Activated CD8-positive, alpha-beta T cell treated with anti-CD3 and anti-CD28 coated beads for 36 hours (primary cell): ENCODE measurements at regions of chr1 and their contacts with region 1.

Region 1: GRCh38 chr1:1826356-1827088 is 48.3 kb upstream of the NADK start:
- DNase-seq: no peak
- ATAC-seq: no peak
- H3K4me3 Mint-ChIP-seq: no peak overlapping the region
- H3K27ac Mint-ChIP-seq: peak overlapping the region; percentile 26
- H3K4me1 Mint-ChIP-seq: peaks cover 45% of the 10 kb centered on the region
- H3K27me3 Mint-ChIP-seq: no peaks in the 10 kb centered on the region
- CTCF ChIP-seq: no peak

Region 2: GRCh38 chr1:1809489-1809888 is 17.0 kb before region 1 on chr1:
- CTCF ChIA-PET with region 1: interaction called, 10 read pairs
- POLR2A ChIA-PET with region 1: no interaction called
- intact Hi-C with region 1: no loop called
- DNase-seq: no peak
- ATAC-seq: no peak
- H3K4me3 Mint-ChIP-seq: no peak overlapping the region
- H3K27ac Mint-ChIP-seq: no peak overlapping the region
- H3K4me1 Mint-ChIP-seq: peaks cover 5% of the 10 kb centered on the region
- H3K27me3 Mint-ChIP-seq: no peaks in the 10 kb centered on the region
- CTCF ChIP-seq: no peak

Region 3: DNA sequence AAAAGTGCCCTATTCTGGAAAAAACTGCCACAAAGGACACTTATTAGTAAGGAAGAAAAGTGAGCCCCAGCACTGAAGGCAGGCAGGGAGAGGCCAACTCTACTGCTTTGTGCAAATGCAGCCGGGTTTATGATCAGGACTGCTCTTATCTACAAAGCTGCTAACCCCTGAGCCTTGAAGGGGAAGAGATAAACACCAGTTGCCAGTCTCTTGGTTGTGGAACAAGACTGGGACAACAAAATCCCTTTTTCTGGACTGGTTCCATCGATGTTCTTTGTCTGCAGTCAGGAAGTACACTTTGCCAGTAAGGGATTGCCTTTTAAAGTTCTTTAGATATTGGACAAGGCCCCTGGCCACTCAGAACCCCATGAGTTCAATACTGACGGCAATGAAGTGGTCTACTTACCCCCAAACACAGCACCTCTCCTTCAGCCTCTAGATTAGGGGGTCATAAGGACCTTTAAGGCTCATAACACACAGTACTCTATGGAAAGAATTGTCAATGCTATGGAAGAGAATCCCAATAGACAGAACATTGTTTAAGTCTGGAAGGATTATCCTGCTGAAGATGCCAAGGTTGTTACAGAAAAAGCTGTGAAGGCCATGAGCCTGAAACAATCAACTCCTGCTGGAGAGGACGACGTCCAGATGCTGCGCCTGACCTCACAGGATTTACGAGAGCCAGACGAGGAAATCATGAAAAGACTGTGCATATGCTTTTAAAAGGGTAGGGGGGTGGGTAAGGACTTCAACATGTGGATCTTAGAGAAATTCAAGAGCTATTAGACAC is 20.7 kb after region 1 on chr1:
- CTCF ChIA-PET with region 1: no interaction called
- POLR2A ChIA-PET with region 1: no interaction called
- intact Hi-C with region 1: no loop called
- DNase-seq: no peak
- ATAC-seq: no peak
- H3K4me3 Mint-ChIP-seq: no peak overlapping the region
- H3K27ac Mint-ChIP-seq: peak overlapping the region; percentile 31
- H3K4me1 Mint-ChIP-seq: peaks cover 53% of the 10 kb centered on the region
- H3K27me3 Mint-ChIP-seq: no peaks in the 10 kb centered on the region
- CTCF ChIP-seq: no peak

Region 4: GRCh38 chr1:2279210-2279639 is 452.7 kb after region 1 on chr1:
- CTCF ChIA-PET with region 1: no interaction called
- POLR2A ChIA-PET with region 1: no interaction called
- intact Hi-C with region 1: no loop called
- DNase-seq: no peak
- ATAC-seq: no peak
- H3K4me3 Mint-ChIP-seq: no peak overlapping the region
- H3K27ac Mint-ChIP-seq: peak overlapping the region; percentile 59
- H3K4me1 Mint-ChIP-seq: peaks cover 50% of the 10 kb centered on the region
- H3K27me3 Mint-ChIP-seq: no peaks in the 10 kb centered on the region
- CTCF ChIP-seq: no peak